ENCODE measurements at regions of chr9 and their contacts with region 1.

Region 1: GRCh38 chr9:110936719-110937452 is 101.4 kb downstream of the LPAR1 start:
- DNase-seq: no peak
- ATAC-seq: peak; percentile 67
- H3K4me3 ChIP-seq: no peak overlapping the region
- H3K27ac ChIP-seq: peak overlapping the region; percentile 90 to 92
- H3K4me1 ChIP-seq: peaks cover 5 to 21% of the 10 kb centered on the region in 2 donors
- H3K27me3 ChIP-seq: no peaks in the 10 kb centered on the region

Region 2: GRCh38 chr9:110900917-110901316 is 36.0 kb before region 1 on chr9:
- intact Hi-C with region 1: loop called in 1 of 2 experiments (anchors 5 kb)
- DNase-seq: no peak
- ATAC-seq: no peak
- H3K4me3 ChIP-seq: no peak overlapping the region
- H3K27ac ChIP-seq: peak overlapping the region; percentile 71 to 76
- H3K4me1 ChIP-seq: peaks cover 7 to 11% of the 10 kb centered on the region in 2 donors
- H3K27me3 ChIP-seq: no peaks in the 10 kb centered on the region